ENCODE measurements at regions of chr15 and their contacts with region 1.

Region 1: DNA sequence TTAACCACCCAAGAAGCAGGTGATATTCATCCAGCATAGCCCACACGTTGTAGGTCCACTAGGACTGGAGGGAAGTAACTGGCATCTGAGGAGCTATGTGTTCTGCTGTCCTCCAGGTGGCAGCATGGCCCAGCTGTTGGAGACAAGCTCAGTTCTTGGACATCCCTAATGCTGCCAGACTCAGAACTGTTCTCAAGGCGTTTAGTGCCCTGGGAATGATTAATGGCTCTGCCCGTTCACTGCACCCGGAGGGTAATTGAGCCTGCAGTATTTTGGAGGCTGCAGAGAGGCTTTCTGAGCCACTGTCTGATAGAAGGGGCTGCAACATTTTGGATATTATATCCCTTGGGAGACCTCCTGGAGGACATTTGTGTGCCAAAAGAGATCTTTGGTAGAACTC is 521.2 kb upstream of the SEMA6D start:
- DNase-seq: peak; percentile 82
- H3K4me3 ChIP-seq: no peak overlapping the region
- H3K27ac ChIP-seq: no peak overlapping the region
- H3K4me1 ChIP-seq: peaks cover 0 to 6% (median 0%) of the 10 kb centered on the region in 6 donors
- H3K27me3 ChIP-seq: no peaks in the 10 kb centered on the region
- CTCF ChIP-seq: peak; percentile 25 to 84 (median 62)
- POLR2A ChIP-seq: no peak

Region 2: DNA sequence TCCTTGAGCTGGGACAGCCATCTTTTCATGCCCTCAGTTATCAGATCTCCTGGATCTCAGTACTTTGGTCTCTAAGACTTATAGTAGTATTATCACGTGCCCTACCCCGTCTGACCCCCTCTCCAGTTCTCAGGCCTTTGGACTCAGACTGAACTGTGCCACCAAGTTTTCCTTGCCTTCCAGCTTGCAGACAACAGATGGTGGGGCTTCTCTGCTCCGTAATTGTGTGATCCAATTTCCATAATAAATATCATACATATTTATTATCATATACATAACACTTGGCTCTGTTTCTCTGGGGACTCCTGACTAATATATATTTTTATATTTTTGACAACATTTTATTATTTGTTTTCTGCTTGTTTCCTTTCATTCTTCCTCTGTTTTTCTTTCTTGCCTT is 62.5 kb after region 1 on chr15:
- intact Hi-C with region 1: no loop called
- DNase-seq: no peak
- H3K4me3 ChIP-seq: no peak overlapping the region
- H3K27ac ChIP-seq: no peak overlapping the region
- H3K4me1 ChIP-seq: no peaks in the 10 kb centered on the region
- H3K27me3 ChIP-seq: no peaks in the 10 kb centered on the region
- CTCF ChIP-seq: no peak
- POLR2A ChIP-seq: no peak

Region 3: GRCh38 chr15:47652328-47652727 is 456.3 kb after region 1 on chr15:
- intact Hi-C with region 1: no loop called
- DNase-seq: no peak
- H3K4me3 ChIP-seq: no peak overlapping the region
- H3K27ac ChIP-seq: no peak overlapping the region
- H3K4me1 ChIP-seq: peaks cover 0 to 6% (median 0%) of the 10 kb centered on the region in 6 donors
- H3K27me3 ChIP-seq: no peaks in the 10 kb centered on the region
- CTCF ChIP-seq: no peak
- POLR2A ChIP-seq: no peak

Region 4: DNA sequence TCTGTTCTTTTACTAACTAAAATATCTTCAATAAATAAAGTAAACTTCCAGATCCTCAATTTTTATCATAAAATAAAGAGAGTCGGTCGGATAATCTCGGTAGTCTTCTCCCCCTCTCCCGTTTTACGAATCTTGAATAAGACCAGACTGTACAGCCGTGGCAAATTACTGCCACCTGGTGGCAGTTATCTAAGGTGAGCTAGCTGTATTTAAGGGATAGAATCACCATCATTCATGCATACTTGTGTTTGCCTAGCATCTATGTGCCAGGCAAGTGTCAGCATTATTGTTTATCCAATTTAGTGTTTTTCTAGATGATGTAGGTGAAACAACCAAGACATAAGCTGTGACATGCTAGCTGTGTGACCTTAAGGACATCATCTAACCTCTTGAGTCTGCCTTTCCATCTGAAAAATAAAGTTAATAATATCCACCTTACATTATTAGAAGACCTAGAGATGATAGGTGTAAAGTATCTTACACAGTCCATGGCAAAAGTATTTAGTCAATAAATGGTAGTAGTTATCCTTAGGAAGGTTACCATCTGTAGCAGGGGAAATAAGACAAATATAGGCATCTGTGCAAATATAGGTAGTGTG is 1156.5 kb after region 1 on chr15:
- intact Hi-C with region 1: loop called (anchors 10 kb)
- DNase-seq: no peak
- H3K4me3 ChIP-seq: no peak overlapping the region
- H3K27ac ChIP-seq: no peak overlapping the region
- H3K4me1 ChIP-seq: peaks cover 0 to 9% (median 5%) of the 10 kb centered on the region in 6 donors
- H3K27me3 ChIP-seq: no peaks in the 10 kb centered on the region
- CTCF ChIP-seq: peak; percentile 29 to 76 (median 59)
- POLR2A ChIP-seq: no peak